CD8-positive, alpha-beta memory T cell (primary cell): ENCODE measurements at regions of chr2 and their contacts with region 1.

Region 1: DNA sequence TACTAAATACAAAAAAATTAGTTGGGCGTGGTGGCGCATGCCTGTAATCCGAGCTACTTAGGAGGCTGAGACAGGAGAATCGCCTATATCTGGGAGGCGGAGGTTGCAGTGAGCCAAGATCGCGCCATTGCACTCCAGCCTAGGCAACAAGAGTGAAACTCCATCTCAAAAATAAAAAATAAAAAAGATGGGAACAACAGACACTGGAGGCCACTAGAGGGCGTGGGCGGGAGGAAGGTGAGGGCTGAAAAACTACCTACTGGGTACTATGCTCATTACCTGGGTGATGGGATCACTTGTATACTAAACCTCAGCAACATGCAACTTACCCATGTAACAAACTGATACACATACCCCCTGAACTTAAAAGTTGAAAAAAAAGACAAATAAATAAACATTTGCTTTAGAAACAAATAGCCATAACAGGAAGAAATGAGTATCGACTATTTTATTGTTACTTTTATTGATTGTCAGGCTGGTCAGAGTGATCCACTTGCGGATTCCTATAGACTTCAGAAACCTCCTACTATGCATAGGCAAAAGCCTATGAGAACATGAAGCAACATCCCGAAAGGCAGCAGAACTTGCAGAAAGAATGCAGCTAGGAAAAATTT is 61.1 kb downstream of the TMEM163 start:
- DNase-seq: peak in 3 of 5 donors; percentile 21 to 53 (median 26)
- H3K4me3 ChIP-seq: no peak overlapping the region
- H3K4me3 Mint-ChIP-seq: no peak overlapping the region
- H3K27ac ChIP-seq: no peak overlapping the region
- H3K27ac Mint-ChIP-seq: no peak overlapping the region
- H3K4me1 ChIP-seq: peaks cover 4% of the 10 kb centered on the region
- H3K4me1 Mint-ChIP-seq: peaks cover 23 to 38% (median 24%) of the 10 kb centered on the region in 3 donors
- H3K27me3 ChIP-seq: no peaks in the 10 kb centered on the region
- H3K27me3 Mint-ChIP-seq: peaks cover 3 to 6% of the 10 kb centered on the region in 2 donors

Region 2: DNA sequence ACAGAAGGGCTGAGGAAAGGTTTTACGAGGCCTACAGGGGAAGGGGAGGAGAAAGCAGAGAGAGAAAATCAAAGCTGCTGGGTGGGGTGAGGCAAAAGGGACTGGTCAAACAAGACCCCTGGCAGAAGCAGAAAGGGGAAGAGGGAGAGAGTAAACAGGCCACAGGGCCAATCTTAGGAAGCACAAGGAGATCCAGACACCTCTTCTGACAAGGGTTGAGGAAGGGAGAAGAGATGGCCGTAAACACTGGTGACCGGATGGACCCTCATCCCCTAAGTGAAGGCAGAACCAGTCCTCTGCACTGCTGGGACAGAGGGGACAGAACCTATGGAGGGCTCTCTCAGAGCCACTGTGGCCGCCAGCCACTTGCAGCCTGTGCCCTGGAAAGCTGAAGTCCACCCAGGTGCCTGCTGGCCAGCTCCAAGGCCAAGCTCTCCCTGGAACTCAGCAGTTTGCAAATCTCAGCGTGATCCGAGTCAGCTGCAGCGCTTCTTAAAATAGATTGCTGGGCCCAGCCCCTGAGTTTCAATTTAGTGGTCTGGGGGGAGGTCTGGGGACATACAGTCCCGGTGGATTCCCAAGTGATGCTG is 47.7 kb before region 1 on chr2:
- CTCF ChIA-PET with region 1: no interaction called
- POLR2A ChIA-PET with region 1: no interaction called
- DNase-seq: no peak
- H3K4me3 ChIP-seq: no peak overlapping the region
- H3K4me3 Mint-ChIP-seq: no peak overlapping the region
- H3K27ac ChIP-seq: no peak overlapping the region
- H3K27ac Mint-ChIP-seq: no peak overlapping the region
- H3K4me1 ChIP-seq: no peaks in the 10 kb centered on the region
- H3K4me1 Mint-ChIP-seq: peaks cover 0 to 2% (median 1%) of the 10 kb centered on the region in 3 donors
- H3K27me3 ChIP-seq: no peaks in the 10 kb centered on the region
- H3K27me3 Mint-ChIP-seq: peaks cover 3 to 11% of the 10 kb centered on the region in 2 donors

Region 3: DNA sequence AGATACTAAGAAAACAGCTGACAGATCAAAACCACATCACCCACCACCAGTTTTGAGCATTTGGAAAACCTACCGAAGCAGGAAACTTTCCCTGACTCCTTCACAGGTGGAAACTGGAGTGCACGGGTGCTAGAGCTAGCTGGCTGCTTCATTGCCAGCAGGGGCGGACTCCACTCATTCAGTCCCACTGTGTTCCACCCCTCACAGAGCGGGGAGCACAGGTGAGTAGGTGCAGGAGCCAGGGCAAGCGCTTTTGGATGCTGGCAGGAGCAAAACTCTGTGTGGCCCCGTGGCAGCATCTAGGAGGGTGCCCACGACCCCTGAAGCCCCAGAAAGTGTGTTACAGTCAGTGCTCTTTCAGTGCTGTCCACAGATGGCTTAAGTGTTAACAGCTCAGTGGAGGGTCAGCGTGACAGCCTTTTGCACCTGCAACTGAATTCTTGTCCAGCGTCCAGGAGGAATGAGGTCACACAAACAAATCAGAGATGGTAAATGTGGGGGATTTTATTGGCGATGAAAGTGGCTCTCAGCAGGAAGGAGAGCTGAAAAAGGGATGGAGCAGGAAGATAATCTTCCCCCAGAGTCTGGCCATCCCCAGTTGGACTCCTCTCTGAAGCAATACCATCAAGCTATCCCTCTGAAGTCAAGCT is 10.0 kb before region 1 on chr2:
- CTCF ChIA-PET with region 1: no interaction called
- POLR2A ChIA-PET with region 1: no interaction called
- DNase-seq: no peak
- H3K4me3 ChIP-seq: no peak overlapping the region
- H3K4me3 Mint-ChIP-seq: no peak overlapping the region
- H3K27ac ChIP-seq: no peak overlapping the region
- H3K27ac Mint-ChIP-seq: no peak overlapping the region
- H3K4me1 ChIP-seq: no peaks in the 10 kb centered on the region
- H3K4me1 Mint-ChIP-seq: no peaks in the 10 kb centered on the region
- H3K27me3 ChIP-seq: no peaks in the 10 kb centered on the region
- H3K27me3 Mint-ChIP-seq: peaks cover 0 to 3% of the 10 kb centered on the region in 2 donors

Region 4: GRCh38 chr2:134669731-134670669 is 12.3 kb after region 1 on chr2:
- CTCF ChIA-PET with region 1: interaction called, 13 read pairs
- POLR2A ChIA-PET with region 1: interaction called, 4 read pairs
- DNase-seq: peak; percentile 45 to 92 (median 87)
- H3K4me3 ChIP-seq: peak overlapping the region; percentile 42
- H3K4me3 Mint-ChIP-seq: peak overlapping the region; percentile 54 to 80 (median 65)
- H3K27ac ChIP-seq: peak overlapping the region; percentile 57
- H3K27ac Mint-ChIP-seq: peak overlapping the region; percentile 76 to 100 (median 96)
- H3K4me1 ChIP-seq: peaks cover 69% of the 10 kb centered on the region
- H3K4me1 Mint-ChIP-seq: peaks cover 86 to 96% (median 86%) of the 10 kb centered on the region in 3 donors
- H3K27me3 ChIP-seq: no peaks in the 10 kb centered on the region
- H3K27me3 Mint-ChIP-seq: peaks cover 0 to 2% of the 10 kb centered on the region in 2 donors

Region 5: DNA sequence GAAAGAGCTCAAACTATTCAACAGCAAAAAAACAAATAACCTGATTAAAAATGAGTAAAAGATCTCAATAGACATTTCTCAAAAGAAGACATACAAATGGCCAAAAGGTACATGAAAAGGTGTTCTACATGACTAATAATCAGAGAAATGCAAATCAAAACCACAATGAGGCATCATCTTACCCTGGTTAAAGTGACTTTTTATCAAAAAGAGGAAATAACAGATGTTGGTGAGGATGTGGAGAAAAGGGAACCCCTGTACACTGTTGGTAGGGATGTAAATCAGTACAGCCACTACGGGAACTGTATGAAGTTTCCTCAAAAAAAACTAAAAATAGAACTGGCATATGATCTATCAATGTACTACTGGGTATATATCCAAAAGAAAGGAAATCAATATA is 100.9 kb after region 1 on chr2:
- CTCF ChIA-PET with region 1: no interaction called
- POLR2A ChIA-PET with region 1: no interaction called
- DNase-seq: no peak
- H3K4me3 ChIP-seq: no peak overlapping the region
- H3K4me3 Mint-ChIP-seq: no peak overlapping the region
- H3K27ac ChIP-seq: no peak overlapping the region
- H3K27ac Mint-ChIP-seq: no peak overlapping the region
- H3K4me1 ChIP-seq: no peaks in the 10 kb centered on the region
- H3K4me1 Mint-ChIP-seq: no peaks in the 10 kb centered on the region
- H3K27me3 ChIP-seq: no peaks in the 10 kb centered on the region
- H3K27me3 Mint-ChIP-seq: peaks cover 21 to 71% of the 10 kb centered on the region in 2 donors